AG04449 (cell line): ENCODE measurements at regions of chr7 and their contacts with region 1.

Region 1: GRCh38 chr7:105531792-105532671 is at the start of gene RINT1:
- DNase-seq: peak; percentile 45
- H3K4me3 ChIP-seq: peak within 1 kb of the TSS; percentile 91
- CTCF ChIP-seq: peak; percentile 97

Region 2: GRCh38 chr7:105098863-105099515 is 433.0 kb before region 1 on chr7:
- CTCF ChIA-PET with region 1: no interaction called
- POLR2A ChIA-PET with region 1: no interaction called
- DNase-seq: no peak
- H3K4me3 ChIP-seq: no peak overlapping the region
- CTCF ChIP-seq: no peak

Region 3: GRCh38 chr7:105559926-105560325 is 27.9 kb after region 1 on chr7:
- CTCF ChIA-PET with region 1: interaction called, 13 read pairs
- POLR2A ChIA-PET with region 1: no interaction called
- DNase-seq: no peak
- H3K4me3 ChIP-seq: no peak overlapping the region
- CTCF ChIP-seq: no peak

Region 4: DNA sequence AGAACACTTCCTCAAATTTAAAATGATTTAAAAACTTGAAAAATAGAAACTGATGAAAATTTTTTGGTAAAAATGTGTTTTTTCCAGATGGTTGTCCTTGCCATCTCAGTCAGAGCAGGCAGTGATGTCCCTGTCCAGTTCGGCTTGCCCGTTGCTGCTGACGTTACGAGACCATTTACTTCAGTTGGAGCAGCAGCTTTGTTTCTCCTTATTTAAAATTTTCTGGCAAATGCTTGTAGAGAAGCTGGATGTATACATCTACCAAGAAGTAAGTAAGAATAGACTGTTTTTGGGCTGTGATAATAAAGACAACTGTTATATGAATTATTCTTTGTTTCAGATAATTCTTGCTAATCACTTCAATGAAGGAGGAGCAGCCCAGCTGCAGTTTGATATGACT is 33.2 kb after region 1 on chr7:
- CTCF ChIA-PET with region 1: interaction called, 13 read pairs
- POLR2A ChIA-PET with region 1: no interaction called
- DNase-seq: no peak
- H3K4me3 ChIP-seq: no peak overlapping the region
- CTCF ChIP-seq: no peak